Activated T-helper 1 cell treated with anti-CD3 and anti-CD28 coated beads, Interleukin-12 subunit alpha, Interleukin-12 subunit beta, Interleukin-2, Interleukin-4 antibody, amounts not matched to agents 30 ng/mL and 10 ng/mL and 1 ng/mL, durations not matched to agents 14 hours and 24 hours and 36 hours (primary cell): ENCODE measurements at regions of chr20 and their contacts with region 1.

Region 1: GRCh38 chr20:46406199-46406985 is at the start of gene ELMO2:
- DNase-seq: peak; percentile 94
- H3K4me3 Mint-ChIP-seq: peak within 1 kb of the TSS; percentile 94
- H3K27ac Mint-ChIP-seq: peak within 1 kb of the TSS; percentile 96
- H3K4me1 Mint-ChIP-seq: peaks cover 68% of the 10 kb centered on the region
- H3K27me3 Mint-ChIP-seq: no peaks in the 10 kb centered on the region
- total RNA-seq, gene ELMO2: 79.7 and 91.1 TPM in 2 replicates

Region 2: DNA sequence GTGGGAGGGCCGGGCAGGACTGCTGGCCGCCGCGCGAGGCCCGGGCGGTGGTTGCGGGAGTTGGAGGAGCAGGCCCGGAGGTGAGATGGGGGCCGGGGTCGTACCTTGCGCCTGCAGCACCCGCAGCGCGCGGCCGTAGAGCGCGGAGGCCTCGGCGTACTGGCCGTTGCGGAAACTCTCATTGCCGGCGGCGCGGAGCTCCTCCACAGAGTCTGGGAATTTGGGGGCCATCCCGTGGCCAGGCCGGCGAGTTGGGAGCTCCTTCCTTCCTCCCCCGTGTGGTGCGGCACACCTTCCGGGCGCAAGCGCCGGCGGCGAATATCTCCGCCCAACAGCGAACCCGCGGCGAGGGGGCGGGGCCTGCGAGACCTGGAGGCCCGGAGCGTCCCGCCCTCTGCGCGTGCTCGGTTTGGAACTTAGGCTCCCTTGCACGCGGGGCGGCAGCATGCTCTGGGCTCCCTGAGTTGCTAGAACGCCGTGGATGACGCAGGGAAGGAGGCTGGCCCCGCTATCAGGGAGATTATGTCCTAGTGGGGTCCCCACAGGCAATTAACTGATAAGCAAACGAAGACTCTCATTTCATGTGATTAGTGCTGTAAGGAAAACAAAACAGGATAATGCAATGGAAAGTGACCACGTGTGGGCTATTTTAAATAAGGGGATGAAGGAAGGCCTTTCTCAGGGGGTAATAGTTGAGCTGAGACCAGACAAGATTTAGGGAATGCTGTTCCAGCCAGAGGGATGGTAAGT is 1446.1 kb before region 1 on chr20 and contains the start of gene TOMM34:
- intact Hi-C with region 1: loop called (anchors 2 kb)
- DNase-seq: peak; percentile 94
- H3K4me3 Mint-ChIP-seq: peak within 1 kb of the TSS; percentile 99
- H3K27ac Mint-ChIP-seq: peak within 1 kb of the TSS; percentile 100
- H3K4me1 Mint-ChIP-seq: peaks cover 74% of the 10 kb centered on the region
- H3K27me3 Mint-ChIP-seq: no peaks in the 10 kb centered on the region
- total RNA-seq, gene TOMM34: 53.0 and 55.4 TPM in 2 replicates

Region 3: GRCh38 chr20:46022411-46023147 is 383.8 kb before region 1 on chr20:
- intact Hi-C with region 1: loop called (anchors 2 kb)
- DNase-seq: peak; percentile 64
- H3K4me3 Mint-ChIP-seq: peak overlapping the region; percentile 78
- H3K27ac Mint-ChIP-seq: no peak overlapping the region
- H3K4me1 Mint-ChIP-seq: peaks cover 23% of the 10 kb centered on the region
- H3K27me3 Mint-ChIP-seq: peaks cover 47% of the 10 kb centered on the region

Region 4: DNA sequence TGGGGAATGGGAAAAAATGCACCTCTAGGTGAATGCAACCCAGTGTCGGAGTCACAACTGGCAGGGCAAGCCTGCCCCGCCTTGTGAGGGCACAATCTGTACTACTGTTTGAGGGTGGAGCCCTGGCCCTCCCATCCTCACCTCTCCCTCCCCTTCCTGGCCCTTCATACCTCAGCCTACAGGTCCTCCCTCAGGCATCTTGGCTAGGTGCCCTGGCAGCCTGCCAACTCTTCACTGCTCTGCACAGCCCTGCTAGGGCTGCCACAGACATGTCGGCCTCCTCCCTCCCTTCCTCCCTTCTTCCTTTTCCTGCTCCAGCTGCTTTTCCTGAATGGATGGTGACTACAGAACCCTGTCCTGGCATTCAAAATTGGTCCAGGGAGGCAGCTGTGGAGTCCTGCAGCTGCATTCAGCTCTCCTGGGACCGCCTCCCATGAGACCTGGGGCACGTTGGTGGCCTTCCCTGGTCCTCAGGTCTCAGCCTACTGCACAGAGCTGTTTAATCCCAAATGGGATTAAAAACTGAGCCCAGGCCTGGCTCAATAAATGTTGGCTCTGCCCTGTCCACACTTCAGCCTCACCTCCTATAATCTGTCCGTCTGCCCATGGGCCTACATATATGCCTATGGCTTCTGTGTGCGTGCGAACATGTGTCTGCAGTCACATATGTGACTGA is 150.8 kb before region 1 on chr20:
- intact Hi-C with region 1: no loop called
- DNase-seq: no peak
- H3K4me3 Mint-ChIP-seq: no peak overlapping the region
- H3K27ac Mint-ChIP-seq: no peak overlapping the region
- H3K4me1 Mint-ChIP-seq: no peaks in the 10 kb centered on the region
- H3K27me3 Mint-ChIP-seq: peaks cover 26% of the 10 kb centered on the region

Region 5: GRCh38 chr20:46363800-46364634 is 42.4 kb before region 1 on chr20:
- intact Hi-C with region 1: loop called (anchors 1 kb)
- DNase-seq: peak; percentile 82
- H3K4me3 Mint-ChIP-seq: peak overlapping the region; percentile 93
- H3K27ac Mint-ChIP-seq: peak overlapping the region; percentile 82
- H3K4me1 Mint-ChIP-seq: peaks cover 66% of the 10 kb centered on the region
- H3K27me3 Mint-ChIP-seq: no peaks in the 10 kb centered on the region

Region 6: GRCh38 chr20:46552460-46553420 is 146.3 kb after region 1 on chr20:
- intact Hi-C with region 1: loop called (anchors 2 kb)
- DNase-seq: peak; percentile 61
- H3K4me3 Mint-ChIP-seq: peak overlapping the region; percentile 35
- H3K27ac Mint-ChIP-seq: peak overlapping the region; percentile 91
- H3K4me1 Mint-ChIP-seq: peaks cover 68% of the 10 kb centered on the region
- H3K27me3 Mint-ChIP-seq: no peaks in the 10 kb centered on the region

Region 7: GRCh38 chr20:46994341-46994740 is 587.9 kb after region 1 on chr20:
- intact Hi-C with region 1: loop called (anchors 1 kb)
- DNase-seq: peak; percentile 74
- H3K4me3 Mint-ChIP-seq: peak overlapping the region; percentile 64
- H3K27ac Mint-ChIP-seq: peak overlapping the region; percentile 90
- H3K4me1 Mint-ChIP-seq: peaks cover 80% of the 10 kb centered on the region
- H3K27me3 Mint-ChIP-seq: peaks cover 6% of the 10 kb centered on the region